Activated CD4-positive, alpha-beta memory T cell treated with anti-CD3 and anti-CD28 coated beads for 36 hours (primary cell): ENCODE measurements at regions of chr22 and their contacts with region 1.

Region 1: DNA sequence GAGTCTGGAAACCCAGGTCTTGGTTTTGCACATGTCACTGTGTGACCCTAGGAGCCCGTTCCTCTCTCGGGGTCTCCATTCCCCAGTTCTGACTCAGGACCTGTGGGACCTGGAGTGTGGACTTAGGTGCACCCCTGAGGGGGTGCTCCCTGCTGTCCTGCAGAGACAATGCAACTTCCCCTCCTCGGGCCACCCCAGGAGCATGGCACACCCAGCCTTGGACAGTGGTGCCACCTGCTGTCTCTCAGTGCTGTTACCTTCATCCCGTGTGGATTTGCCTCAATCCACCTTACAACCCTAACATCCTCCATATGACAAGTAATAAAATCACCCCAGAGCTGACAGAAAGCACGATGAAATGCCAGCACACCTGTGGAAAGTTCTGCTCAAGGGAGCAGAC is 27.5 kb upstream of the CRYBB3 start:
- DNase-seq: peak; percentile 58
- H3K4me3 Mint-ChIP-seq: no peak overlapping the region
- H3K27ac Mint-ChIP-seq: no peak overlapping the region
- H3K4me1 Mint-ChIP-seq: no peaks in the 10 kb centered on the region
- H3K27me3 Mint-ChIP-seq: no peaks in the 10 kb centered on the region

Region 2: GRCh38 chr22:25076336-25076735 is 95.8 kb before region 1 on chr22:
- CTCF ChIA-PET with region 1: interaction called, 36 read pairs
- POLR2A ChIA-PET with region 1: no interaction called
- intact Hi-C with region 1: loop called (anchors 5 kb)
- DNase-seq: peak; percentile 85
- H3K4me3 Mint-ChIP-seq: peak overlapping the region; percentile 26
- H3K27ac Mint-ChIP-seq: peak overlapping the region; percentile 80
- H3K4me1 Mint-ChIP-seq: peaks cover 65% of the 10 kb centered on the region
- H3K27me3 Mint-ChIP-seq: no peaks in the 10 kb centered on the region

Region 3: DNA sequence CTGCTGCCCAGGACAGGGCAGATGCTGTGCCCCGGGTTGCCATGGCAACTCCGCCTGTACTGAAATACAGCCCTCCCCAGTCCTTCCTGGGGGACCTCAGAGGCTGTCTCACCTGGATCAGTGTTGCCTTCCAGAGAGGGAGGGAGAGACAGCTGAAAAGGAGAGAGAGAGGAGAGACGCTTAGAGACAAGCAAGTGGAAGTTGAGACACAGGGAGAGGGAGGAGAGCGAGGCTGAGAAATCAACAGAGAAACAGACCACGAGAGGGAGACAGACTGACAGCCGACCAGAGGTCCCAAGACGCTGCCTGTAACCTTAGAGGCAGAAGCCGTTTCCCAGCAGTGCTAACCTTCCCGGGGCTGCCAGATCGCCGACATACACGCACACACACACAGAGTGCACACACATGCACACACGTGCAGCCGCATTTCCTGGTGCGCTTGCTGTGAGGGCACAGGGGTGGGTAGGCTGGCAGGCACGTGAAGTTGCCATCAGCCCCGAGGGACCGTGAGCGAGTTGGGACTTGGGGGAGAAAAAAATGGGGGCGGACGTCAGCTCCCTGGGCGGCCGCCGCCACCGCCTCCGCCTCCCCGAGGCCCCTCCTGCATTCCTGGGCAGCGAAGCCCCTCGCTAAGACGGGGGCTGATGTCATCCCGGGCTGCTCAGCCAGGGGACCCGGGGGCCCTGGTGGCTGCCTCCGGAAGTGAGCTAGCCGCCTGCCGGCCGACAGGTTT is 61.1 kb before region 1 on chr22:
- CTCF ChIA-PET with region 1: interaction called, 11 read pairs
- POLR2A ChIA-PET with region 1: no interaction called
- intact Hi-C with region 1: no loop called
- DNase-seq: peak; percentile 62
- H3K4me3 Mint-ChIP-seq: peak overlapping the region; percentile 70
- H3K27ac Mint-ChIP-seq: no peak overlapping the region
- H3K4me1 Mint-ChIP-seq: peaks cover 10% of the 10 kb centered on the region
- H3K27me3 Mint-ChIP-seq: no peaks in the 10 kb centered on the region